B cell (primary cell): ENCODE measurements at regions of chr14 and their contacts with region 1.

Region 1: DNA sequence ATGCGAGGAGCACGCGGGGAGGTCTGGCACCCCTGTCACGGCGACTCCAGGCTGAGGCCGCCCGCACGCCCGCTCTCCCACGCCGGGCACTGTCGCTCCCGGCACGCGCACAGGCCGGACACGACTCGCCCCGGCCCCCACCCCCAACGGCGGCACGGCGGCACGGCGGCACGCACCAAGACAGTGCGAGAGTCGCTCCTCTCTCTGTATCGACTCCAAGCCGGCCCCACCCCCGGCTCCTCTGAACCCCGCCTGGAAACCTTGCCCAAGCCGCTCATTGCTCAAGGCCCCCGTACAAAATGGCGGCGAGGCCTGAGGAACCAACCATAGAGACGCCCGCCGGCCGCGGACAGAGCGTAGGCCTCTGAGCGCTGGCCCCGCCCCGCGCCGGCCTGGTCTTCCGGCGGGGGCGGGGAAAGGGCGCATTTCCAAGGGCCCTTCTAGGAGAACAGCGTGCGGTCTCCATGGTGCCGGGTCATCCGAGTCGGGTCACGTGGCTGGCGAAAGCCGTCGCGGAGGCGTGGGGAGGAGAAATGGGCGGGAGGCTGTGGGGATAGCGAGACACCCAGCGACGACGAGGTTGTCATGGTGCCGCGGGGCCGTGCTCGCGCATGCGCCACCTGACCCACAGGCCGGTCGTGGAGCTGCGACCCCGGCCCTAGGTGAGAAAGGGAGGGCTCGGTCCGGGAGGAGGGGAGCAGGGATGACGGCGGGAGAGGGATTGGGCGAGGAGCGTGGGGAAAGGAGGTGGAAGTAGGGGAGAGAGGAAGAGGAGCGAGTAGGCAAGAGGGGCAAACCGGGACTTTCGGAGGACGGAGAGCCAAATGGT is at the start of gene CIPC:
- DNase-seq: peak; percentile 99
- ATAC-seq: peak; percentile 85
- H3K4me3 ChIP-seq: peak within 1 kb of the TSS; percentile 85 to 99 (median 99)
- H3K4me3 Mint-ChIP-seq: peak within 1 kb of the TSS; percentile 86
- H3K27ac ChIP-seq: peak within 1 kb of the TSS; percentile 92 to 99
- H3K27ac Mint-ChIP-seq: peak within 1 kb of the TSS; percentile 96
- H3K4me1 ChIP-seq: peaks cover 45 to 51% of the 10 kb centered on the region in 2 donors
- H3K4me1 Mint-ChIP-seq: peaks cover 66% of the 10 kb centered on the region
- H3K27me3 ChIP-seq: no peaks in the 10 kb centered on the region
- H3K27me3 Mint-ChIP-seq: no peaks in the 10 kb centered on the region
- CTCF ChIP-seq: no peak
- total RNA-seq, gene CIPC: 46.8 and 47.0 TPM in 2 replicates

Region 2: GRCh38 chr14:76151398-76152339 is 946.2 kb before region 1 on chr14 and contains the start of gene GPATCH2L:
- CTCF ChIA-PET with region 1: no interaction called
- POLR2A ChIA-PET with region 1: no interaction called
- intact Hi-C with region 1: loop called (anchors 5 kb)
- DNase-seq: peak; percentile 96
- ATAC-seq: peak; percentile 95
- H3K4me3 ChIP-seq: peak within 1 kb of the TSS; percentile 62 to 96 (median 90)
- H3K4me3 Mint-ChIP-seq: peak within 1 kb of the TSS; percentile 98
- H3K27ac ChIP-seq: peak within 1 kb of the TSS; percentile 88 to 95
- H3K27ac Mint-ChIP-seq: peak within 1 kb of the TSS; percentile 97
- H3K4me1 ChIP-seq: peaks cover 30 to 31% of the 10 kb centered on the region in 2 donors
- H3K4me1 Mint-ChIP-seq: peaks cover 51% of the 10 kb centered on the region
- H3K27me3 ChIP-seq: no peaks in the 10 kb centered on the region
- H3K27me3 Mint-ChIP-seq: no peaks in the 10 kb centered on the region
- CTCF ChIP-seq: no peak
- total RNA-seq, gene GPATCH2L: 82.7 and 97.8 TPM in 2 replicates

Region 3: DNA sequence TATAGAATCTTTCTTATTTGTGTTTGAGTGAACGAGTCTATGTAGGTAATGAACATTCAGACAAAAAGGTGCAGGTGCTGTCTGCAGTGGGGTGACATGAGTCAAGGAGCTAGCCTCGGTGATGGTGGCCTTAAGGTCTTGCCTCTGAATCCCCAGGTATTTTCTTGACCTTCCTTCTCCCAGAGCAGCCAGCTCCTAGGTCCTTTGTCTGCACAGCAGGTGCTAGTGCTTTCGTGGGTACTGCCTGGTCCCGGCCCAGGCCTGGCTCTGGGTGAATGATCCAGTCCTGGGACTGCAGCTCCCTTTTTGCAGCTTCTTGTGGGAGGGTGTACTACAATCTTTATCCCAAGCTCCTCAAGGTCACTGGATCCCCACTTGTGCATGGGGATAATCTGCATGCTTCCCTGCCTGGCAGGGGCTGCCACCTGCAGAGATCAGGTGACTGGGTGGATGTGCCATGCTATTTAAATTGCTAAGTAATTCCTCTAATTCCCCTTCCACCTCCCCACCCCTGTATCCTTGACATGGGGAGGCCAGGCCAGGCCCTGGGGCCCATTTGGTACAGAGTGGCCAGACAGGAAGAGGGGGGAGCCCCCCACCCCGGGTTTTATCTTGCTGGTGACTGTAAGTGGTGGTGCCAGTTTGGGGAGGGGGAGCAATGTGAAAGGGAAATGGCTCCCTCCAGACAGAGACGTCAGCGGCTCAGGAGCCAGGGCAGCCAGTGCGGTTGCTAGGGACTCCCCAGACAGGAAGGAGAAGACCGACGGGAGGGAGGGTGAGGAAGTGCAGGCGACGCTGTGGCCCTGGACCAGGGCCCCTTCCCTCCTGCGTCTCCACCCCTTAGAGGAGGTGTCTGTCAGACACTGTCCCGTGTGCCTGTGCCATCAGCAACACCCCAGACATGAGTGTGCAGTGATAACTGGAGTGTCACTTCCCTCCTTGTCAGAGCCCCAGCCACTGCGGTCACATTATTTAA is 329.9 kb before region 1 on chr14:
- CTCF ChIA-PET with region 1: no interaction called
- POLR2A ChIA-PET with region 1: no interaction called
- intact Hi-C with region 1: no loop called
- DNase-seq: peak; percentile 68
- ATAC-seq: peak; percentile 88
- H3K4me3 ChIP-seq: peak overlapping the region in 2 of 5 experiments; percentile 2 to 12
- H3K4me3 Mint-ChIP-seq: peak overlapping the region; percentile 61
- H3K27ac ChIP-seq: peak overlapping the region in 1 of 2 donors; percentile 83
- H3K27ac Mint-ChIP-seq: no peak overlapping the region
- H3K4me1 ChIP-seq: peaks cover 16% of the 10 kb centered on the region in 2 donors
- H3K4me1 Mint-ChIP-seq: peaks cover 14% of the 10 kb centered on the region
- H3K27me3 ChIP-seq: peaks cover 0 to 12% (median 6%) of the 10 kb centered on the region in 4 experiments
- H3K27me3 Mint-ChIP-seq: peaks cover 8% of the 10 kb centered on the region
- CTCF ChIP-seq: no peak

Region 4: GRCh38 chr14:76956316-76957090 is 141.4 kb before region 1 on chr14:
- CTCF ChIA-PET with region 1: interaction called, 3 read pairs
- POLR2A ChIA-PET with region 1: no interaction called
- intact Hi-C with region 1: loop called (anchors 1 kb)
- DNase-seq: peak; percentile 87
- ATAC-seq: peak; percentile 70
- H3K4me3 ChIP-seq: peak overlapping the region; percentile 23 to 64 (median 59)
- H3K4me3 Mint-ChIP-seq: peak overlapping the region; percentile 95
- H3K27ac ChIP-seq: peak overlapping the region; percentile 89 to 94
- H3K27ac Mint-ChIP-seq: peak overlapping the region; percentile 99
- H3K4me1 ChIP-seq: peaks cover 50 to 75% of the 10 kb centered on the region in 2 donors
- H3K4me1 Mint-ChIP-seq: peaks cover 65% of the 10 kb centered on the region
- H3K27me3 ChIP-seq: no peaks in the 10 kb centered on the region
- H3K27me3 Mint-ChIP-seq: no peaks in the 10 kb centered on the region
- CTCF ChIP-seq: no peak

Region 5: GRCh38 chr14:77086017-77086736 is 11.7 kb before region 1 on chr14:
- CTCF ChIA-PET with region 1: interaction called, 30 read pairs
- POLR2A ChIA-PET with region 1: no interaction called
- intact Hi-C with region 1: no loop called
- DNase-seq: peak; percentile 56
- ATAC-seq: peak; percentile 78
- H3K4me3 ChIP-seq: no peak overlapping the region
- H3K4me3 Mint-ChIP-seq: no peak overlapping the region
- H3K27ac ChIP-seq: peak overlapping the region in 1 of 2 donors; percentile 33
- H3K27ac Mint-ChIP-seq: peak overlapping the region; percentile 32
- H3K4me1 ChIP-seq: peaks cover 0 to 7% of the 10 kb centered on the region in 2 donors
- H3K4me1 Mint-ChIP-seq: peaks cover 26% of the 10 kb centered on the region
- H3K27me3 ChIP-seq: no peaks in the 10 kb centered on the region
- H3K27me3 Mint-ChIP-seq: peaks cover 5% of the 10 kb centered on the region
- CTCF ChIP-seq: no peak

Region 6: GRCh38 chr14:77151918-77152588 is 54.1 kb after region 1 on chr14:
- CTCF ChIA-PET with region 1: interaction called, 15 read pairs
- POLR2A ChIA-PET with region 1: no interaction called
- intact Hi-C with region 1: no loop called
- DNase-seq: peak; percentile 46
- ATAC-seq: peak; percentile 58
- H3K4me3 ChIP-seq: no peak overlapping the region
- H3K4me3 Mint-ChIP-seq: no peak overlapping the region
- H3K27ac ChIP-seq: no peak overlapping the region
- H3K27ac Mint-ChIP-seq: no peak overlapping the region
- H3K4me1 ChIP-seq: no peaks in the 10 kb centered on the region
- H3K4me1 Mint-ChIP-seq: no peaks in the 10 kb centered on the region
- H3K27me3 ChIP-seq: peaks cover 0 to 29% (median 2%) of the 10 kb centered on the region in 4 experiments
- H3K27me3 Mint-ChIP-seq: peaks cover 42% of the 10 kb centered on the region
- CTCF ChIP-seq: peak; percentile 31

Region 7: GRCh38 chr14:77616454-77617229 is 518.7 kb after region 1 on chr14 and contains the start of gene SPTLC2:
- CTCF ChIA-PET with region 1: no interaction called
- POLR2A ChIA-PET with region 1: no interaction called
- intact Hi-C with region 1: loop called (anchors 5 kb)
- DNase-seq: peak; percentile 99
- ATAC-seq: peak; percentile 94
- H3K4me3 ChIP-seq: peak within 1 kb of the TSS; percentile 67 to 93 (median 76)
- H3K4me3 Mint-ChIP-seq: peak within 1 kb of the TSS; percentile 95
- H3K27ac ChIP-seq: peak within 1 kb of the TSS; percentile 75 to 78
- H3K27ac Mint-ChIP-seq: peak within 1 kb of the TSS; percentile 91
- H3K4me1 ChIP-seq: peaks cover 28% of the 10 kb centered on the region in 2 donors
- H3K4me1 Mint-ChIP-seq: peaks cover 40% of the 10 kb centered on the region
- H3K27me3 ChIP-seq: no peaks in the 10 kb centered on the region
- H3K27me3 Mint-ChIP-seq: no peaks in the 10 kb centered on the region
- CTCF ChIP-seq: no peak
- total RNA-seq, gene SPTLC2: 41.4 and 52.2 TPM in 2 replicates